CD4-positive, alpha-beta T cell (primary cell): ENCODE measurements at regions of chr2 and their contacts with region 1.

Region 1: DNA sequence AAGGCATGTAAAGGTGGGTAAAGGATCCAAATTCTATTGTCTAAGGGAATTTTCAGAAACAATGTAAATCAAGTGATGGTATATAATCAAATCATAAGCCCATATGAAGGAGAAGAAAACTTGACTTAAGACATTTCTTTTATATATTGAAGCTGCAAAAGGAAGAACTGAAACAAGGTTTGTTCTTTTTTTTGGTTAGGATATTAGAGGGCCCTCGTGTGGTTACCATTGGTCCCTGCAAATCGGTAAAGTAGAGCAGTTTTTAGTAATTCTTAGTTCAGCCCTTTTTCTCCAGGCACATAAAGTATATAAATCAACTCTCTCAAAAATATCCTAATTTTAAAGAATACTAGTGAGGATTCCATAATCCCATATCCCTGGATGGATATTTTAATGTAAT is 105.6 kb upstream of the STK17B start:
- DNase-seq: peak in 7 of 14 experiments; percentile 9 to 79 (median 46)
- ATAC-seq: peak; percentile 59
- H3K4me3 ChIP-seq: no peak overlapping the region
- H3K4me3 Mint-ChIP-seq: peak overlapping the region; percentile 11
- H3K27ac ChIP-seq: no peak overlapping the region
- H3K27ac Mint-ChIP-seq: peak overlapping the region; percentile 79
- H3K4me1 ChIP-seq: peaks cover 25% of the 10 kb centered on the region
- H3K4me1 Mint-ChIP-seq: peaks cover 70% of the 10 kb centered on the region
- H3K27me3 ChIP-seq: no peaks in the 10 kb centered on the region
- H3K27me3 Mint-ChIP-seq: no peaks in the 10 kb centered on the region
- CTCF ChIP-seq: peak; percentile 81

Region 2: DNA sequence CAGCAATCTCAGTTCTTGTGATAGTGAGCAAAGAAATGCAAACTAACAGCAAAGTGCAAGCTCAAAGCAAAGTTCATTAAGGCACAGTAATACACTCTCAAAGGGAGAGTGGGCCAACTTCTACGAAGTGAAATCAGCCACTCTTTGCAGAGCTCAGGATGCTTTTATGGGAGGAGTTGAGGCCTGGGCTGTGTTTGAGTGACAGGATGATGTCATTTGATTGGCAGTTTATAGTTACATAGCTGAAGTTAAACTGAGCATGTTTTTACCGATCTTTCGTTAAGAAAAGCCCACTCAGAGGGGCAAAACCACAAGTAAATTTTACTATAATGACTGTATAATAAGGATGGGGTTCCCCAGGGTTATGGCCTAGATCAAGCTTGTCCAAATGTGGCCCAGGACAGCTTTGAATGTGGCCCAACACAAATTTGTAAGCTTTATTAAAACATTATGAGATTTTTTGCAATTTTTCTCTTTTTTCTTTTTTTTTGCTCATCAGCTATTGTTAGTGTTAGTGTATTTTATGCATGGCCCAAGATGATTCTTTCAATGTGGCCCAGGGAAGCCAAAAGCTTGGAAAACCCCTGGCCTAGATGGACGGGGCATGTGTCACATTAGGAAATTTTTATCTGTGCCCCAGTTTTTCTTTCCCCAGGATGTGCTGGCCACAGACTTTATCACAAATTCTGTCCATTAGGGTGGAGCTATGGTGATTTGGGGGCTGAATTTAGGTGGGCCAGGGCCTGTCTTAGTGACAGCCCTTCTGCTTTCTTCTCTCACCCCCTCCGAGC is 200.0 kb before region 1 on chr2:
- CTCF ChIA-PET with region 1: interaction called, 6 read pairs
- POLR2A ChIA-PET with region 1: interaction called, 13 read pairs
- intact Hi-C with region 1: loop called (anchors 2 kb)
- DNase-seq: no peak
- ATAC-seq: no peak
- H3K4me3 ChIP-seq: no peak overlapping the region
- H3K4me3 Mint-ChIP-seq: no peak overlapping the region
- H3K27ac ChIP-seq: no peak overlapping the region
- H3K27ac Mint-ChIP-seq: no peak overlapping the region
- H3K4me1 ChIP-seq: peaks cover 9% of the 10 kb centered on the region
- H3K4me1 Mint-ChIP-seq: peaks cover 27% of the 10 kb centered on the region
- H3K27me3 ChIP-seq: no peaks in the 10 kb centered on the region
- H3K27me3 Mint-ChIP-seq: no peaks in the 10 kb centered on the region
- CTCF ChIP-seq: no peak

Region 3: DNA sequence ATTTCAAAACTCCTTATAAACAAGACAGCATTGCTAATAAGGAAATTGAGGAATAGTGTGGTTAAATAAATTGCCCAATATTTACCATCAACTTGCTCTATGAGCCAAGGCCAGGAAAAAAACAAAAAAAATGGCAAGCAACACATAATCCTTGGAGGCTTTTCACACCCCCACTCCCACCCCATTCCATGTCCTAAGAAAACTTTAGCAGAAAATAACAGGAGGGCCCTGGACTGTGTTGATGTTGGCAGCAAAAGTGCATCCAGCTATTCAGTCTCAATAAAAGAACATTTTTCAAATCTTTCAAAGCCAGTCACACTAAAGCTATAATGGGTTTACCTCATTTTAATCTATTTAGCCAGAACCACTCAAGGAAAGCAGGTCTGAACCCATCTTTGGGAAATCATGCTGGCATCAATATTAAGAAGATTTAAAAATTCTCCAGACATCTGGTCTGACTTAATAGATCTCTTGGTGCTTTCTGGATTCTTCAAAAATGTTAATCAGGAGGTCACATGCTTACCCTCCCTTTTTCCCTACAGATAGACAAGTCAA is 71.0 kb before region 1 on chr2:
- CTCF ChIA-PET with region 1: interaction called, 8 read pairs
- POLR2A ChIA-PET with region 1: interaction called, 6 read pairs
- intact Hi-C with region 1: loop called in 1 of 2 experiments (anchors 1 kb)
- DNase-seq: no peak
- ATAC-seq: no peak
- H3K4me3 ChIP-seq: no peak overlapping the region
- H3K4me3 Mint-ChIP-seq: no peak overlapping the region
- H3K27ac ChIP-seq: no peak overlapping the region
- H3K27ac Mint-ChIP-seq: peak overlapping the region; percentile 43
- H3K4me1 ChIP-seq: peaks cover 34% of the 10 kb centered on the region
- H3K4me1 Mint-ChIP-seq: peaks cover 45% of the 10 kb centered on the region
- H3K27me3 ChIP-seq: no peaks in the 10 kb centered on the region
- H3K27me3 Mint-ChIP-seq: no peaks in the 10 kb centered on the region
- CTCF ChIP-seq: no peak

Region 4: DNA sequence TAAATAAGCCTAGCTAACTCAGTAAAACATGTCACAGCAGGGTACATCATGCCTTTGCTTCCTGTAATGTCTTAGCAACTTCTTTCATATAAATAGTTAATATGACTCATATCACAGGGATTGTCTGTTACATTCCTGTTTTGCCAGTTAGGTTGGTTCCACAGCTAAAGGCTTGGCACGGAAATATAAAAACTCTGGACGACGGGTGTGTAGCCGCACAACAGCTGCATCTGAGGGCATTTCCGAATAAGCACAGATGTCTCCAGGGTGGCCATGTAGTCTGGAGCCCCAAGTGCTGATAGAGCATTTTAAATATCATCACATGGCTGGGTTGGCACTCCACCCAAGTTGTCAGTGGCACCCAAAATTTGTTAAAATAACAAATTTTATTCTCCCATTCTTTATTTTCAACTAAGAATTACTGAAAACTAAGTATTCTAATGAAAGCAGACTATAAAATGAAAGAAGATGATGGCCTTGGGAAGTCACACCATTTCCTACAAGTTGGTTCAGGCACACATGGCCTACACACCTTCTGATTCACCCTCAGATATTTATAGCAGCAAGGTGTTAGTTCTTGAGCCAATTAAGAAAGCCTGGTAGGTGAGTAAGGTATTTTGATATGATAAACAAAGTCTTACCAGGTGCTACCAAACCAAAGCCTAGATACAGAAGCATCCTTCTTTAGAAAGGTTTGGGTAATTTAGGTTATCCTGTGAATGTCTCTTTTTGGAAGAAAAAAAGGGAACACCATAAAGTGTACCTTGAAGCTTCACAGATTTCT is 43.8 kb before region 1 on chr2:
- CTCF ChIA-PET with region 1: interaction called, 8 read pairs
- POLR2A ChIA-PET with region 1: interaction called, 12 read pairs
- intact Hi-C with region 1: no loop called
- DNase-seq: peak in 1 of 14 experiments; percentile 40
- ATAC-seq: no peak
- H3K4me3 ChIP-seq: no peak overlapping the region
- H3K4me3 Mint-ChIP-seq: peak overlapping the region; percentile 23
- H3K27ac ChIP-seq: peak overlapping the region; percentile 19 to 63
- H3K27ac Mint-ChIP-seq: peak overlapping the region; percentile 97
- H3K4me1 ChIP-seq: peaks cover 58% of the 10 kb centered on the region
- H3K4me1 Mint-ChIP-seq: peaks cover 94% of the 10 kb centered on the region
- H3K27me3 ChIP-seq: no peaks in the 10 kb centered on the region
- H3K27me3 Mint-ChIP-seq: no peaks in the 10 kb centered on the region
- CTCF ChIP-seq: no peak

Region 5: DNA sequence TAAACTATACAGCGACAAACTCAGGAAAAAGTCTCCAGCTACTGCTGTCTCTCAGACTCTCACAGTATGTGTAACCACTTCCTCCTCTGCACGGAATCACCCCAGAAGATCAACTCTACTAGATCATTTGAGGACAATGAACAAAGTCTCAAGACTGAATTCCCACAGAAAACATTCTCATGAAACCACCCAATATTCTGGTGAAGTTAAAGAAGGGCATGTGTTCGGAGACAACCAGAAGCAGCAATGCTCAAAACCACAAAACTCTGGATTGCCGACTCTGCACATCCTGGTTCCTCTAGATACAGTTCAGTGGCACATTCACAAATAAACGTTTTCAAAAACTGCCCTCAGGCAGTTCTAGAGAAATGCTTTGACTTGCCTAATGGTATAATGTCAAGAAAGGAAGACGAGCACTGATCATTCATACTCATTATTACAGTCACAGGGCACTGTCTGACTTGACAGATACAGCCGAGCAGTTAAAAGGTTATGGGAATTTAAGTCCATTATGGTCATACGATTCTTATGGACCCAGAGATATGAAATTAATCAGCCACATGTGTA is 13.7 kb before region 1 on chr2:
- CTCF ChIA-PET with region 1: interaction called, 7 read pairs
- POLR2A ChIA-PET with region 1: interaction called, 35 read pairs
- intact Hi-C with region 1: loop called in 1 of 2 experiments (anchors 1 kb)
- DNase-seq: peak in 11 of 14 experiments; percentile 14 to 87 (median 42)
- ATAC-seq: peak; percentile 79
- H3K4me3 ChIP-seq: peak overlapping the region; percentile 28
- H3K4me3 Mint-ChIP-seq: peak overlapping the region; percentile 43
- H3K27ac ChIP-seq: peak overlapping the region; percentile 79 to 85
- H3K27ac Mint-ChIP-seq: peak overlapping the region; percentile 84
- H3K4me1 ChIP-seq: peaks cover 48% of the 10 kb centered on the region
- H3K4me1 Mint-ChIP-seq: peaks cover 88% of the 10 kb centered on the region
- H3K27me3 ChIP-seq: no peaks in the 10 kb centered on the region
- H3K27me3 Mint-ChIP-seq: no peaks in the 10 kb centered on the region
- CTCF ChIP-seq: no peak

Region 6: DNA sequence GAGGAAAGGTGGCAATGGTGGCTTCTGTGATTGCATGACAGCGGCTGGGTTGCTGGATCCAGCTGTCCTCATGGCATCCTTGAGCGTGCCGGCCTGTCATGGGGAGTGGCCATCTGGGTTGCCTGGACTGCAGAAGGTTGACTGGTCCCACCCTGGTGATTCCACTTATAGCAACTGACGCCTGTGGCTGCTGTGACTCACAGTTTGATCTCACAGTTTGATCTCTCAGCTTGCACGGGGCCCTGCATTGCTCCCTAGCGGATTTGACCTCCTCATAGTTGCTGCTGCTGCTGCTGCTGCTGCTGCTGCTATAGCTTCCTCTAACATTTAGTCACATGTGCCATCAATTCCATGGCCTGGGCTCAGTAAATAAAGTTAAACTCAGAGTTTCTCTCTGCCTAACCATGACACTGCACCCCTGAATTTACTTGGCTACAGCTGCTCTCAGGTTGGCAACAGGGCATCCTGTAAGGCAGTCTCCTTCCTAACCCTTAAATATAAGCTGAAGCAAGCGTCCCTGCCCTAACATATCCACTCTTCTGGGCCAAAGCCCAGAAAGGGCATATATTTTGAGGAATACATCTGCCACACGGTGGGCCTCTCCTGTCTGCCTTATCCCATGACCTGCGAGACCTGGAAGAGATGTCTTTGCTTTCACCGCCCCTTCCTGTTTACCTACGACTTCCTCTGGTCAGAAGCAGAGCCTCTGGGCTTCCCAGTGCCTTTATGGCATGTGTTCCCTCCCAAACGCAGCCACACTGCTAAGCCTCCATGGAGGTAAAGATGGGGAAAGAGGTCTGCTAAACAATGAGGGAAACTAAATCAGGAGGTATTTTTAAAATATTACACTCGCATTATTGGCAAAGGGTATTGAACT is 324.7 kb after region 1 on chr2:
- CTCF ChIA-PET with region 1: no interaction called
- POLR2A ChIA-PET with region 1: no interaction called
- intact Hi-C with region 1: no loop called
- DNase-seq: no peak
- ATAC-seq: no peak
- H3K4me3 ChIP-seq: no peak overlapping the region
- H3K4me3 Mint-ChIP-seq: no peak overlapping the region
- H3K27ac ChIP-seq: no peak overlapping the region
- H3K27ac Mint-ChIP-seq: no peak overlapping the region
- H3K4me1 ChIP-seq: no peaks in the 10 kb centered on the region
- H3K4me1 Mint-ChIP-seq: no peaks in the 10 kb centered on the region
- H3K27me3 ChIP-seq: no peaks in the 10 kb centered on the region
- H3K27me3 Mint-ChIP-seq: peaks cover 47% of the 10 kb centered on the region
- CTCF ChIP-seq: no peak

Region 7: GRCh38 chr2:196798980-196799379 is 522.0 kb after region 1 on chr2:
- CTCF ChIA-PET with region 1: no interaction called
- POLR2A ChIA-PET with region 1: no interaction called
- intact Hi-C with region 1: no loop called
- DNase-seq: no peak
- ATAC-seq: no peak
- H3K4me3 ChIP-seq: peak overlapping the region; percentile 92
- H3K4me3 Mint-ChIP-seq: peak overlapping the region; percentile 99
- H3K27ac ChIP-seq: peak overlapping the region in 1 of 2 donors; percentile 72
- H3K27ac Mint-ChIP-seq: peak overlapping the region; percentile 84
- H3K4me1 ChIP-seq: peaks cover 24% of the 10 kb centered on the region
- H3K4me1 Mint-ChIP-seq: peaks cover 36% of the 10 kb centered on the region
- H3K27me3 ChIP-seq: peaks cover 0 to 5% of the 10 kb centered on the region in 2 experiments
- H3K27me3 Mint-ChIP-seq: peaks cover 8% of the 10 kb centered on the region
- CTCF ChIP-seq: no peak

Region 8: GRCh38 chr2:198232281-198232680 is 1955.3 kb after region 1 on chr2:
- CTCF ChIA-PET with region 1: no interaction called
- POLR2A ChIA-PET with region 1: no interaction called
- intact Hi-C with region 1: no loop called
- DNase-seq: no peak
- ATAC-seq: no peak
- H3K4me3 ChIP-seq: no peak overlapping the region
- H3K4me3 Mint-ChIP-seq: no peak overlapping the region
- H3K27ac ChIP-seq: no peak overlapping the region
- H3K27ac Mint-ChIP-seq: no peak overlapping the region
- H3K4me1 ChIP-seq: no peaks in the 10 kb centered on the region
- H3K4me1 Mint-ChIP-seq: no peaks in the 10 kb centered on the region
- H3K27me3 ChIP-seq: no peaks in the 10 kb centered on the region
- H3K27me3 Mint-ChIP-seq: peaks cover 40% of the 10 kb centered on the region
- CTCF ChIP-seq: no peak